HEK293 (cell line): ENCODE measurements at regions of chr7 and their contacts with region 1.

Region 1: GRCh38 chr7:22860784-22861482 is 38.3 kb upstream of the TOMM7 start:
- H3K4me3 ChIP-seq: no peak overlapping the region
- H3K27ac ChIP-seq: no peak overlapping the region
- H3K4me1 ChIP-seq: no peaks in the 10 kb centered on the region
- CTCF ChIP-seq: no peak

Region 2: GRCh38 chr7:22647451-22648257 is 213.3 kb before region 1 on chr7:
- CTCF ChIA-PET with region 1: no interaction called
- POLR2A ChIA-PET with region 1: no interaction called
- H3K4me3 ChIP-seq: no peak overlapping the region
- H3K27ac ChIP-seq: no peak overlapping the region
- H3K4me1 ChIP-seq: no peaks in the 10 kb centered on the region
- CTCF ChIP-seq: no peak

Region 3: GRCh38 chr7:22759721-22760120 is 101.2 kb before region 1 on chr7:
- CTCF ChIA-PET with region 1: no interaction called
- POLR2A ChIA-PET with region 1: no interaction called
- H3K4me3 ChIP-seq: no peak overlapping the region
- H3K27ac ChIP-seq: no peak overlapping the region
- H3K4me1 ChIP-seq: no peaks in the 10 kb centered on the region
- CTCF ChIP-seq: no peak

Region 4: GRCh38 chr7:22833957-22834356 is 27.0 kb before region 1 on chr7:
- CTCF ChIA-PET with region 1: no interaction called
- POLR2A ChIA-PET with region 1: no interaction called
- H3K4me3 ChIP-seq: no peak overlapping the region
- H3K27ac ChIP-seq: no peak overlapping the region
- H3K4me1 ChIP-seq: peaks cover 8% of the 10 kb centered on the region
- CTCF ChIP-seq: no peak

Region 5: DNA sequence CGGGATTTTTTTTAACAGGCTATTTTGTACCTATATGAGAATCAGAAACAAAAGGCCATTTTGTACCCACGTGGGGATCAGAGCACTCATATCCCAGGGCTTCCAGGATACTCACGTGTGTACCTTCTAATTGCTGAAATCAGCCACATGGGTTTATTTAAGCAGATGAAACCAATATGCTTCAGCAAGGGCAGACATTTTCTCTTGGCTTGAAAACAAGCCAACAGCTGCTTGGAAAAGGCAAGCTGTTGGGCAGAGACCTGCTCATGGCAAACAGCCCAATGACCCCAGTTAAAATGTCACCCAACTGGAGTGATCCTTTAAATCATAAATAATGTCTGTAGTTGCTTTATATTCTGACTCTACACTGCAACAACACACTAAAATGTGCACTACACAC is 11.8 kb before region 1 on chr7:
- CTCF ChIA-PET with region 1: interaction called, 11 read pairs
- POLR2A ChIA-PET with region 1: no interaction called
- H3K4me3 ChIP-seq: no peak overlapping the region
- H3K27ac ChIP-seq: no peak overlapping the region
- H3K4me1 ChIP-seq: no peaks in the 10 kb centered on the region; the same call in 1 of the 2 replicates
- CTCF ChIP-seq: no peak

Region 6: GRCh38 chr7:22876986-22877729 is 16.2 kb after region 1 on chr7:
- CTCF ChIA-PET with region 1: no interaction called
- POLR2A ChIA-PET with region 1: no interaction called
- H3K4me3 ChIP-seq: no peak overlapping the region
- H3K27ac ChIP-seq: no peak overlapping the region
- H3K4me1 ChIP-seq: no peaks in the 10 kb centered on the region
- CTCF ChIP-seq: no peak